Activated CD8-positive, alpha-beta T cell treated with anti-CD3 and anti-CD28 coated beads for 36 hours (primary cell): ENCODE measurements at regions of chr10 and their contacts with region 1.

Region 1: DNA sequence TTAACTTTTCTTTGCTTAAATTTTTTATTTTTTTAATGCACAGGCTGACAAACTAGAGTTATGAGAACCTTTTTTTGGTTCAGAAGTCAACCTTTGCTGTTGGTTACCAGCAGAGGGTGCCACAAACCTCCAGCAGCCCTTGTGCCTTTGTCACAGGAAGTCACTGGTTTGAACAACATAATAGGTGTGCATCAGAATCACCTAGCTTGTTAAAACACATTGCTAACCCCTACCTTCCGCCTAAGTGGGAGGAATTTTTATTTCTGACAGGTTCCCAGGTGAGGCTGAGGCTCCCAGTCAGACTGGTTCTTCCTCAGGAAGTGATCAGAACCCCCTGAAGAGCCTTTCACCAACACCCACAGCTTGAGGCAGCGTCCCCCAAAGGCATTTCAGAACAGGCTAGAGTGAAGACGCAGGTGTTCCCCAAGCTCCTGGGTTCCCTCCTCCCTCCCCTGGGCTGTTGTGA is 22.6 kb upstream of the VDAC2 start:
- DNase-seq: peak; percentile 80
- ATAC-seq: peak; percentile 92
- H3K4me3 Mint-ChIP-seq: no peak overlapping the region
- H3K27ac Mint-ChIP-seq: peak overlapping the region; percentile 88
- H3K4me1 Mint-ChIP-seq: peaks cover 12% of the 10 kb centered on the region
- H3K27me3 Mint-ChIP-seq: no peaks in the 10 kb centered on the region
- CTCF ChIP-seq: peak; percentile 67

Region 2: DNA sequence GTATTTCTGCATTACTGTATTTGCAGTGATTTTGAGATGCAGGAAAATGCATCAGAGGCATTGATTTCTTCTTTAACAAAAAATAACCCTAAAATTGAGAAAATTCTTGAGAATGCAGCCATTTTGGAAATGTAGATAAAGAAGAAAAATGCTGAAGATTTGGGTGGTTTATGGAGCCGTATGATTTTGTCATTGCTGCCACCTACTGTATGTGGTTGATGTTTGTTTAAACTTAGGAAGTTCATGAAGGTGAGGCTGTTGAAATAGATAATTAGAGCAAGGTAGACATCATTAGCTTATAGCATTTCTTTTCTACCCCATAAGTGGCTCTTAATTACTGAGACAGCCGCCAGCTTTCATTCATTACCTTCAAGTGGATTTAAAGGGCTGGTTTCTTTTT is 168.6 kb before region 1 on chr10:
- CTCF ChIA-PET with region 1: no interaction called
- POLR2A ChIA-PET with region 1: no interaction called
- intact Hi-C with region 1: no loop called
- DNase-seq: no peak
- ATAC-seq: no peak
- H3K4me3 Mint-ChIP-seq: no peak overlapping the region
- H3K27ac Mint-ChIP-seq: peak overlapping the region; percentile 12
- H3K4me1 Mint-ChIP-seq: peaks cover 30% of the 10 kb centered on the region
- H3K27me3 Mint-ChIP-seq: no peaks in the 10 kb centered on the region
- CTCF ChIP-seq: peak; percentile 52

Region 3: DNA sequence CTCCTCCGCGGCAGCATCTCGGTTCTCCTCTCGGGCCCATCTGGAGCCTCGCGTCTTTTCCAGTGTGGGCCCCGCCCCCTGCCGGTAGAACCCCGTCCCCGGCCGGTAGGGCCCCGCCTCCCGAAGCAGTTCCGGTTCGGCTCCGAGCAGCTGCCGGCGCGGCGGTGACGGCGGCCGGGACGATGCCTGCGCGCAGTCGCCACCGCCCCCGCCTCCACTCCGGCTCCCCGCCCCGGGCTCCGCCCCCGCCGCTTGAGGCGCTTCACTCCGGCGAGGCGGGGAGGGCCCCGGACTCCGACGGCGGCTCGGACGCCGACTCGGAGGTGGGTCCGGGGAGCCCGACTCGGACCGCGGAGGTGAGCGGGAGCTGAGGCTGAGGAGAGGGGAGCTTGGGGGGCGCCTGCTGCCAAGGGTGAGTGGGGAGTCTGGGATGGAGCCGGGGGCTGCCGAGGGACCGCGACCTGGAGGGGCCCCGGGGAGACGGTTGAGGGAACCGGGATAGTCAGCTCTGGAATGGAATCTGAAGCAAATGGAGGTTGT is 76.6 kb before region 1 on chr10 and contains the start of gene SAMD8:
- CTCF ChIA-PET with region 1: interaction called, 15 read pairs
- POLR2A ChIA-PET with region 1: no interaction called
- intact Hi-C with region 1: no loop called
- DNase-seq: peak; percentile 99
- ATAC-seq: peak; percentile 91
- H3K4me3 Mint-ChIP-seq: peak within 1 kb of the TSS; percentile 88
- H3K27ac Mint-ChIP-seq: peak within 1 kb of the TSS; percentile 93
- H3K4me1 Mint-ChIP-seq: peaks cover 46% of the 10 kb centered on the region
- H3K27me3 Mint-ChIP-seq: no peaks in the 10 kb centered on the region
- CTCF ChIP-seq: no peak
- total RNA-seq, gene SAMD8: 21.9 to 23.7 TPM

Region 4: GRCh38 chr10:75202321-75203045 is 14.5 kb after region 1 on chr10:
- CTCF ChIA-PET with region 1: interaction called, 57 read pairs
- POLR2A ChIA-PET with region 1: interaction called, 3 read pairs
- intact Hi-C with region 1: no loop called
- DNase-seq: no peak
- ATAC-seq: no peak
- H3K4me3 Mint-ChIP-seq: no peak overlapping the region
- H3K27ac Mint-ChIP-seq: no peak overlapping the region
- H3K4me1 Mint-ChIP-seq: no peaks in the 10 kb centered on the region
- H3K27me3 Mint-ChIP-seq: no peaks in the 10 kb centered on the region
- CTCF ChIP-seq: no peak

Region 5: DNA sequence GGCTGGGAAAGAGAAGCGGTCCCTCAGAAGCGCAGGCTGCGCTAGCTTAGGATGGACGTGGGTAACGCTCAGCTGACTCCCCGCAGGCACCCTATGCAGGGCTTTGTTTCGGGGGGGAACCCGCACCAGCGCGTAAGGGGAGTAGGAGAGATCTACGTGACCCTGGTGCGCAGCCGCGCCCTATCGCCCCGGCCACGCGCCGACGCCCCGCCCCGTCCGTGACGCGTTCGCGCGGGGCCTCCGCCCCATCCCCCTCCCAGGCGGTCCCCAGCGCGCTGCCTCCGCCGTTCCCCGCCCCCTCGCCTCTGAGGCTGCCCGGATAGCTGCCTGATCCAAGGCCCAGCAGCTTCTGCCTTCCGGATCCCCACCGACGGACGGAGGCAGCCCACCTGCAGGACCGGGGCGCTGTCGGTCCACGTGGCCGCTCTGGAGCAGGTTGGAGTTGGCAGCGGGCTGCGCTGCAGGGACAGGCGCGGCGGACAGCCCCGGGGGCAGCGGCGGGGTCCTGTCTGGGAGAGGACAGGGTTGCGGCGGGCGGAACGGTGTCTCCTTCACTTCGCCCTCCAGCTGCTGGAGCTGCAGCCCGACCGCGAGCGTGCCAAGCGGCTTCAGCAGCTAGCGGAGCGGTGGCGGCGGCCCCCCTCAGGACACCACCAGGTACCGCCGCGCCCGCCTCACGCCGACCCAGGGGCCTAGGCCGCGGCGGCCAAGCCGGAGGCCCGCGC is 22.4 kb after region 1 on chr10 and contains the start of gene VDAC2:
- CTCF ChIA-PET with region 1: interaction called, 57 read pairs
- POLR2A ChIA-PET with region 1: interaction called, 11 read pairs
- intact Hi-C with region 1: no loop called
- DNase-seq: peak; percentile 93
- ATAC-seq: peak; percentile 91
- H3K4me3 Mint-ChIP-seq: peak within 1 kb of the TSS; percentile 98
- H3K27ac Mint-ChIP-seq: peak within 1 kb of the TSS; percentile 100
- H3K4me1 Mint-ChIP-seq: peaks cover 38% of the 10 kb centered on the region
- H3K27me3 Mint-ChIP-seq: no peaks in the 10 kb centered on the region
- CTCF ChIP-seq: no peak
- total RNA-seq, gene VDAC2: 253 to 263 TPM

Region 6: DNA sequence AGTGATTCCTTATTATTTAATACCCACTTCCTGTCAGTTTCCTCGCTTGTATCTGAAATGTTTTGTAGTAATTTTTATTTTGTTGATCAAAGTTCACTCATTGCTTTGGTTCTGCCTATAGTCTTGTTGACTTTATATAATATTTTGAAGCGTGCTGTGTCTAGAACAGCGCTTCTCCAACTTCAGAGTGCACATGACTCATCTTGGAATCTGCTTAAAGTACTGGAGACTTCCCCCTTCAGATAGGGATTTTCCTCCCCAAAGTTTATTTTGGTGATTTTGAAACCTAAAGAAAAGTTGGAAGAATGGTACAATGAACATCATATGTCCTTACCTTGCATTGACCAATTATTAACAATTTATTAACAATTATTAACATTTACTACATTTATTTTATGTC is 42.0 kb after region 1 on chr10:
- CTCF ChIA-PET with region 1: interaction called, 118 read pairs
- POLR2A ChIA-PET with region 1: interaction called, 6 read pairs
- intact Hi-C with region 1: loop called (anchors 1 kb)
- DNase-seq: no peak
- ATAC-seq: no peak
- H3K4me3 Mint-ChIP-seq: no peak overlapping the region
- H3K27ac Mint-ChIP-seq: peak overlapping the region; percentile 66
- H3K4me1 Mint-ChIP-seq: peaks cover 49% of the 10 kb centered on the region
- H3K27me3 Mint-ChIP-seq: no peaks in the 10 kb centered on the region
- CTCF ChIP-seq: no peak

Region 7: GRCh38 chr10:75235375-75236177 is 47.6 kb after region 1 on chr10 and contains the start of gene COMTD1:
- CTCF ChIA-PET with region 1: interaction called, 118 read pairs
- POLR2A ChIA-PET with region 1: interaction called, 6 read pairs
- intact Hi-C with region 1: loop called (anchors 1 kb)
- DNase-seq: peak; percentile 96
- ATAC-seq: peak; percentile 77
- H3K4me3 Mint-ChIP-seq: peak within 1 kb of the TSS; percentile 81
- H3K27ac Mint-ChIP-seq: peak within 1 kb of the TSS; percentile 94
- H3K4me1 Mint-ChIP-seq: peaks cover 24% of the 10 kb centered on the region
- H3K27me3 Mint-ChIP-seq: no peaks in the 10 kb centered on the region
- CTCF ChIP-seq: peak; percentile 100
- total RNA-seq, gene COMTD1: 54.5 to 58.1 TPM